ENCODE measurements at regions of chr11 and their contacts with region 1.

Region 1: GRCh38 chr11:12979928-12980689 is 29.0 kb upstream of the RASSF10 start:
- DNase-seq: no peak
- CTCF ChIP-seq: no peak

Region 2: DNA sequence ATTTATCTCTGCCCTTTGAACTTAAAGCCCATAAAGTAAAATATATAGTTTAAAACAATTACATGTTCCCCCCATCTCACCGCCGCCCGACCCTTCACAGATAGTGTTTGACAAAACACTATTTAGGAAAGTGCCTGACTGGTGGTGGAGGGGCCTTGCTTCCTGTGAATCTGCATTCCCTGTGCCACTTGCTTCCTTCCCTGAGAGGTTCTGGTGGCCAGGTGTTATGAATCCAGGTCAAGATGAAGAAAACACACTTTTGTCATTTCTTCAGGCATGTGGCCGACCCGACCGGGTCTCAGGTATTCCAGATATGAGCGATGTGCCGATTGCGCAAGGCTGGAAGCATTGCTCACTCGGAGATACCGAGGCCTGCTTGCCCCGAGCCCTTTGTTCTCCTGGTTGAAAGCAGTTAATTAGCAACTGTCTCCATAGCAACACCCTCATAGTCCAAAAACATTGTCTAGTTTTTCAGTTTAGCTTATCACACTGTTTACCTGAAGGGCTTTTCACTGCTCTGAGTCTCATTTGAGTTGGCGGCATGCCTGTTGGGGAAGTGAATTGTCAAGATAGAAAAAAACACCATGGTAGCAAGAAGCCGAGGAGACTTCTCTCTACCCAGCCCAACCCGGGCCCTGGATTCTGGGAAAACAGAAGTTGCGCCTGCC is 177.6 kb before region 1 on chr11:
- CTCF ChIA-PET with region 1: no interaction called
- POLR2A ChIA-PET with region 1: no interaction called
- DNase-seq: no peak
- CTCF ChIP-seq: no peak

Region 3: DNA sequence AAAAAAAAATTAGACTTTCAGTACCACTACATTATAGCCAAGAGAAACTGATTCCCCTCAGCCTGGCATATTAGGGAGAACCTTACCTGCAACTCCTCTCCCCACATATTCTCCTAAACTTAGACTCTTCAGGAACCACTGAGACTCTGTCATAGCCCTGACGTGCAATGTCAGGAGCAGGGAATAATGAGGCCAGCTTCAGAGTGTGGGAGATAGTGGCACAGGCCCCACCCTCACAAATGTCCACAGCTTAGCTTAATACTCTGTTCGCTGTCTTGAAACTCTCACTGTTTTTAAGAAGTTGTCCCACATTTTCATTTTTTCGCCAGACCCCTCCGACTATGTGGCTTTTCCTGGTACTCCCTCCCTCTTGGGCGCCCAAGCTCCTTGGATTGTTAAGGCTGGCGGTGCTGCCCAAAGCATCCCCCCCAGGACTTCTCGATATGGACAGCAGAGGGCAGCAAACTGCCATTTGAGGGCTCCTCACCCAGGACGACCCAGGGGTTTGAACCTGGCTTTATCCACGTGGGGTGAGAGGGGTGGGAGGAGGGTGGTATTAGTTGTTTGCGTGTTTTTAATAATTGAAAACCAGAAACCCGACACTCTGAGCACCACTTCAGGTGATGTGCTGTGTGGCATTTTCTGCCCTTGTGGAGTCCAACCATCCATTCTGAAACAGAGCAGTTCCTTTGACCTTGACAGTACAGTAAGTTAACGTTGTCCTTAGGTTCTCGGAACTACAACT is 16.1 kb before region 1 on chr11:
- CTCF ChIA-PET with region 1: interaction called, 51 read pairs
- POLR2A ChIA-PET with region 1: no interaction called
- DNase-seq: peak; percentile 80
- CTCF ChIP-seq: peak; percentile 89

Region 4: DNA sequence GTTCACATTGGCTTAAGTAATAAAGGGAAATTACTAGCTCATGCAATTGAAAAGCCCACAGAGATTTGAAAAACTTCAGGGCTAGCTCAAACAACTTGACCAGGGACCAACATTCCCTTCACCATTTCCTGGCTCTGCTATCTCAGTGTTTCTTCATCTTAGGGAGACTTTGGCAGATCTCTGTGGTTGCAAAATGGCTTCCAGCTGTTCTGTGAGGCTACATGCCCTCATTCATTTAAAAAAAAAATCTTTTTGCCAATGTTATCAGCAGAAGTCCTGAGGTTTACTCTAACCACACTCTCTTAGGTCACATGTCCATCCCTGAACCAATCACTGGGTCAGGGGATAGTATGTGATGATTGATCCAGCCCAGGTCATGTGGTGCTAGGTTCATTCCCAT is 15.1 kb after region 1 on chr11:
- CTCF ChIA-PET with region 1: no interaction called
- POLR2A ChIA-PET with region 1: no interaction called
- DNase-seq: no peak
- CTCF ChIP-seq: no peak

Measured in GM10248 (cell line).